CD8-positive, alpha-beta T cell (primary cell): ENCODE measurements at regions of chr14 and their contacts with region 1.

Region 1: GRCh38 chr14:74302634-74303577 is at the start of gene ABCD4:
- DNase-seq: peak; percentile 69 to 90 (median 86)
- ATAC-seq: peak; percentile 87
- H3K4me3 ChIP-seq: peak within 1 kb of the TSS; percentile 69 to 85
- H3K4me3 Mint-ChIP-seq: peak within 1 kb of the TSS; percentile 100
- H3K27ac ChIP-seq: peak within 1 kb of the TSS; percentile 78 to 85
- H3K27ac Mint-ChIP-seq: peak within 1 kb of the TSS; percentile 98
- H3K4me1 ChIP-seq: peaks cover 19% of the 10 kb centered on the region
- H3K4me1 Mint-ChIP-seq: peaks cover 28% of the 10 kb centered on the region
- H3K27me3 ChIP-seq: no peaks in the 10 kb centered on the region
- H3K27me3 Mint-ChIP-seq: no peaks in the 10 kb centered on the region
- CTCF ChIP-seq: peak; percentile 18
- total RNA-seq, gene ABCD4: 67.5 to 76.9 TPM

Region 2: DNA sequence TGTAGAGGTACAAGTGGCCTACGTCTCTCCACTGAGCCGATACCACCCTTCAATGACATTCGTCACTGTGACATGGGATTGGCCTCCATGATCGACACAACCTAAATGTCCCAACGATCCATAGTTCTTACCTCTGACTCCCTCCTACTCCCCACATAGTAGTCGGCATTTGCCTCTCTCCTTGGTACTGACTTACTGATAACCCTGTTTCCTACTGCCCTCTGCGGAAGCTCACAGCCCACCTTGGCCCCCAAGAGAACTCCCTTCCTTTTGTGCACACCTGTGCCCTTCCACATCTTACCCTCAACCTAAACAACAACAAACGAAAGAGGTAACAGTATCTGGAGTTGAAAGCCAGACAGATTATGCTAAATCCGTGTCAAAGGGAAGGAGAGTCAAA is 39.7 kb before region 1 on chr14:
- CTCF ChIA-PET with region 1: no interaction called
- POLR2A ChIA-PET with region 1: no interaction called
- intact Hi-C with region 1: no loop called
- DNase-seq: no peak
- ATAC-seq: no peak
- H3K4me3 ChIP-seq: no peak overlapping the region
- H3K4me3 Mint-ChIP-seq: no peak overlapping the region
- H3K27ac ChIP-seq: no peak overlapping the region
- H3K27ac Mint-ChIP-seq: no peak overlapping the region
- H3K4me1 ChIP-seq: no peaks in the 10 kb centered on the region
- H3K4me1 Mint-ChIP-seq: no peaks in the 10 kb centered on the region
- H3K27me3 ChIP-seq: peaks cover 0 to 3% of the 10 kb centered on the region in 2 experiments
- H3K27me3 Mint-ChIP-seq: no peaks in the 10 kb centered on the region
- CTCF ChIP-seq: no peak

Region 3: GRCh38 chr14:74712499-74713394 is 409.8 kb after region 1 on chr14 and contains the starts of genes AREL1 and FCF1:
- CTCF ChIA-PET with region 1: no interaction called
- POLR2A ChIA-PET with region 1: no interaction called
- intact Hi-C with region 1: loop called in 1 of 2 experiments (anchors 5 kb)
- DNase-seq: peak; percentile 56 to 94 (median 80)
- ATAC-seq: peak; percentile 93
- H3K4me3 ChIP-seq: peak within 1 kb of the TSS; percentile 63 to 87
- H3K4me3 Mint-ChIP-seq: peak within 1 kb of the TSS; percentile 98
- H3K27ac ChIP-seq: peak within 1 kb of the TSS; percentile 78 to 93
- H3K27ac Mint-ChIP-seq: peak within 1 kb of the TSS; percentile 99
- H3K4me1 ChIP-seq: peaks cover 24% of the 10 kb centered on the region
- H3K4me1 Mint-ChIP-seq: peaks cover 65% of the 10 kb centered on the region
- H3K27me3 ChIP-seq: no peaks in the 10 kb centered on the region
- H3K27me3 Mint-ChIP-seq: no peaks in the 10 kb centered on the region
- CTCF ChIP-seq: no peak
- total RNA-seq, gene AREL1: 44.5 to 60.1 TPM
- total RNA-seq, gene FCF1: 32.6 to 34.0 TPM